Common myeloid progenitor, CD34-positive (primary cell): ENCODE measurements at regions of chr6 and their contacts with region 1.

Region 1: GRCh38 chr6:36123257-36124139 is 6.8 kb upstream of the MAPK13 start:
- DNase-seq: peak; percentile 85 to 91 (median 88)
- H3K4me3 ChIP-seq: no peak overlapping the region
- H3K27ac ChIP-seq: no peak overlapping the region
- H3K4me1 ChIP-seq: peaks cover 19 to 34% (median 24%) of the 10 kb centered on the region in 4 experiments
- H3K27me3 ChIP-seq: peaks cover 0 to 19% (median 2%) of the 10 kb centered on the region in 5 experiments

Region 2: DNA sequence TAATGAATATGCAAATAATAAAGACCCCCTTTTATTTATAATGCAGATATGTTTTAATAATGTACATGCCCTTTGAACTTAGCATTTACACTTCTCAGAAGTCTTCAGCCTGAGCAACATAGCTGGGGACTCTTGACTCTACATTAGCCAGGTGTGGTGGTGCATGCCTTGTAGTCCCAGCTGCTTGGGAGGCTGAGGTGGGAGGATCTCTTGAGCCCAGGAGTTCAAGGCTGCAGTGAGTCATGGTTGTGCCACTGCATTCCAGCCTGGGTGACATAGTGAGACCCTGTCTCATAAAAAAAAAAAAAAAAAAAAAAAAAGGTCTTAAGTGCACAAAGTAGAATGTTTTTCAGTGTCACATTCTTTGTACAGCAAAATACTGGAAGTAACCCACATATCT is 10.4 kb before region 1 on chr6:
- CTCF ChIA-PET with region 1: interaction called, 17 read pairs
- POLR2A ChIA-PET with region 1: interaction called, 4 read pairs
- DNase-seq: peak in 1 of 3 donors; percentile 29
- H3K4me3 ChIP-seq: no peak overlapping the region
- H3K27ac ChIP-seq: no peak overlapping the region
- H3K4me1 ChIP-seq: peaks cover 24 to 47% (median 36%) of the 10 kb centered on the region in 4 experiments
- H3K27me3 ChIP-seq: no peaks in the 10 kb centered on the region